ENCODE measurements at regions of chr2 and their contacts with region 1.

Region 1: DNA sequence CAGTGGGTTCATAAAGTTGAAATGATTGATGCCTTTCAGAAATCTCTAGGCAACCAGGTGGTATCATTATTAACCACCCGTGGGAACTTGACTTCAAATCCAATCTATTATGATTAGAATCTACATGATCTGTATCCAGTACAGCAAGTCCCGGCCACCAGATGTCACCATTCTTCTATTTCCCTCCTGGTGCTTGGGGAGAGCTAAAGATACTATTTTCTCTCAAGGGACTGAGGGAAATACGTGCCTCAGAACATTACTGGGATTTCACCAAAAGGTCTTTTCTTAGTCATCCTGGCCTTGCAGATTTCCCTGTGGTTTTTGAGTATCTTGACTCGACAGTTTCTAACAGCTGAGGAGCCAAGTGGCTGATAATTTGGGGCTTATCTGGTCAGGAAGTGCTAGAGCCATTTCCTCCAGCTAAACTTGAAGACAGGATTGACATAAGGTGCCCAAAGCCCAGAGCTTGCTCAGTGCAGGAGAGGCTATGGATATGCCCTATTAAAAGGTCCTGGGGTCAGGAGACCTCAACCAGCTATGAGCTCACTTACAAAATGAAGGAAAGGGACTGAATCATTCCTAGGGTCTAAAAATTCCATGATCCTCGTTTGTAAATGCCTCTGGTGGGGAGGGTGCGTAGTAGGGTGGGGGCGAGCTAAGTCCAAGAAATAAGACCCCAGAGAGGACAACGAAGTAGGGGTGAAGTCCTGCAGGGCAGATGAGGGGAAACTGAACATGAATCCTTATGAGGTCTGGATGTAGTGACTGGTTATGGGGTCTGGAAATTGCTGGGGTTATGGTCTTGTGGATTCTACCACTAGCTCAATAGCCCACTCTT is 135.4 kb upstream of the MGAT5 start:
- DNase-seq: peak; percentile 70 to 91
- ATAC-seq: peak; percentile 45 to 81 (median 61)
- H3K4me3 ChIP-seq: peak overlapping the region in 3 of 10 donors; percentile 1 to 8 (median 2)
- H3K27ac ChIP-seq: peak overlapping the region in 8 of 10 donors; percentile 92 to 98 (median 95)
- H3K4me1 ChIP-seq: peaks cover 4 to 45% (median 40%) of the 10 kb centered on the region in 9 donors
- H3K27me3 ChIP-seq: no peaks in the 10 kb centered on the region
- CTCF ChIP-seq: peak; percentile 48 to 93 (median 84)

Region 2: DNA sequence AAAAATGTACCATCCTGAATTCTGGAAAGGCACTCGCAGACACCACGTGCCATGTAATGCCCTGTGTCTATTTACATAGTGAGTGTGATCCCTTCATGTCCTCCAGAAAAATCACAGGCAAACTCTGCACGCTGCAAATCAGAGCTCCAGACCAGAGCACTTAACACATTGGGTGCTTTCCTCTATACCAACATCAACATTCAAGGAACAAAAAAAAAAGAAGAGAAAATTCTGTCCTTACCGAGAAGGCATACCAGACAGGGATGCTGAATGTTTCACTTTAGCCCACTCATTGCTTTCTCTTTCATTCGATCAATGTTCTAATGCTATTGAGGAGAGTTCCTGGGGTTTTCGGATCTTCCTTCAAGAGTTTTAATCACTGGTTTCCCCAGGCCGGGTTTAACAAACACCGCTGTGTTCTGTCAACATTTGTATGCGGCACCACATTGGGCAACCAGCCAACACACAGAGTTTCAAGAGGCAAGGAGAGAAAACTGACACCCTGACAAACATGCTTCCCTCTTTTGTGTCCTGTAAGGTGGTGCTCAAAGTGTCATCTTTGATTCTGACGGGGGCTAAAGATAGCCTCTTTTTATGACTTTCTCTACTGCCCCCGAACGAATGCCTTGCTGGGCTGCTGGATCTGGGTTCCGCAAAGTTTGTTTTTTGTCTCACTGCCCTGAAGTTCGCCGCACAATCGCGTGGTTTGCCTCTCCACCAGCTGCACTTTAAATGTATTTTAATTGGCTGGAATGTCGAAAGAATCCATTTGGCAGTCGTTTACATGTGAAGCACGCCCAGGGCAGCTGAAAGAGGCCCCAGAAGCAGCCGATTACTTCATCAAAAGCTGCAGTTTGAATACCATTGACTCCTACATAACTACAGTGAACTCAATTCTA is 443.8 kb before region 1 on chr2:
- intact Hi-C with region 1: no loop called
- DNase-seq: peak; percentile 25 to 43
- ATAC-seq: peak; percentile 42 to 76 (median 66)
- H3K4me3 ChIP-seq: peak overlapping the region in 9 of 10 donors; percentile 4 to 48 (median 31)
- H3K27ac ChIP-seq: peak overlapping the region; percentile 4 to 82 (median 75)
- H3K4me1 ChIP-seq: peaks cover 2 to 38% (median 20%) of the 10 kb centered on the region in 9 donors
- H3K27me3 ChIP-seq: no peaks in the 10 kb centered on the region
- CTCF ChIP-seq: no peak

Region 3: DNA sequence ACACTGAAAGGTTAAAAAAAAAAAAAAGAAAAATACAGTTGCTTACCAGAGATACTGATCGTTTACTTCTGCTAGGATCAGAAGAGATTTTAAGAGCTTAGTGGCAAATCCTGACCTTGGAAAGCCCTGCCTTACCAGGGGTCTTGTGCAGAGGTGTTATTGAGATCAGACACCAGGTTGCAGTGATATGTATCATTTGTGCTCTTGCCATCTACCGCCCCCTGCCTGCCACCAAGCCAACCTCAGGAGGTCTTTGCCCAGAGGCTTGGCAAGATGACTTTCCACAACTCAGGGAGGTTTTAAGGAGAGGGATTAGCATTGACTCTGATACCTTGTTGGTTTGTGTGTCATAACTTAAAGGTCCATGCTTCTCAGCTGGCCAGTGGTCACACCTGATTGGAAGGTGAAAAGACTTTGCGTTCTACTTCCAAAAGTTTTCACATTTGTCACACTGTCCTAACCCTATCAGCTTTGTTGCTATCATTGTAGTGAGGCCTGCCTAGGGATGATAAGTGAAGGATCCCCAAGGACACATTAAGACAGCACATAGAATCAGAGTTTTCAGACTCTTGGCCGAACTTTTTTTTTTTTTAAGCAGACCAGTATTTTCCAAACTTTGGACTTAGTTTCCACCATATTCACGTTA is 89.2 kb after region 1 on chr2:
- intact Hi-C with region 1: loop called (anchors 5 to 10 kb)
- DNase-seq: peak; percentile 52 to 60
- ATAC-seq: peak; percentile 63 to 86 (median 80)
- H3K4me3 ChIP-seq: no peak overlapping the region
- H3K27ac ChIP-seq: peak overlapping the region in 5 of 10 donors; percentile 3 to 63 (median 36)
- H3K4me1 ChIP-seq: peaks cover 14 to 58% (median 47%) of the 10 kb centered on the region in 9 donors
- H3K27me3 ChIP-seq: no peaks in the 10 kb centered on the region
- CTCF ChIP-seq: peak; percentile 38 to 76 (median 66)

Region 4: DNA sequence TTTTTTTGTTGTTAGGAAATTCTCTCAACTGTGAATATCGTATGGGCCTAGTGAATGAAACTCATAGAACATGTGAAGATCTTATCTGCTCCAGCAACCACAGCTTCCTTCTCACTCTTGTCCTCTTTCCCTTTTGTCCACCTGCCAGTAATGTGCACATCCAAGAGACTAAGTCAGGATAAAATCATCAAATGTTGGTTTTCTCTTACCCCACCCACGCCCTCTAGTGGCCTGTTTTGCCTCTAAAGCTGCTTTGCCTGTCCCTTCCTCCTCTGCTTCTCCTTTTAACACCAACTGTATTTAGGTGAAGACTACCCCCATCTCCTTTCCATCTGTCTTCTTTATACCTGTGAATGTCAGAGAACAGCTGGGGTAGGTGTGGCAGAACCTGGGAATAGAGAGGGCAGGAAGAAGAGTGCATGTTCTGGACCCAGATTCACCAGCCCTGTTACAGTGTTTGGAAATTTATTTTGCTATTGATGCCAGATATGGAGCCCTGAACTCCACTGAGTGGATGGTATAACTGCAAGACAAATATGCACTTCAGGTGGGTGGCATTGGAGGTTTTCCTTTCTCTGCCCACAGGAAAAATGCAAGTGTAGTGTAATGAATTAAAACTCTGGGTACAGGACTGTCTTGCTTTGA is 127.0 kb after region 1 on chr2:
- intact Hi-C with region 1: loop called (anchors 1 to 10 kb)
- DNase-seq: peak; percentile 55 to 84
- ATAC-seq: peak in 7 of 8 donors; percentile 53 to 79 (median 68)
- H3K4me3 ChIP-seq: no peak overlapping the region
- H3K27ac ChIP-seq: peak overlapping the region in 2 of 10 donors; percentile 24 to 56
- H3K4me1 ChIP-seq: peaks cover 6 to 91% (median 70%) of the 10 kb centered on the region in 9 donors
- H3K27me3 ChIP-seq: no peaks in the 10 kb centered on the region
- CTCF ChIP-seq: peak; percentile 52 to 83 (median 78)

Region 5: GRCh38 chr2:134402410-134402809 is 283.9 kb after region 1 on chr2:
- intact Hi-C with region 1: loop called in 1 of 10 experiments (anchors 2 kb)
- DNase-seq: peak in 1 of 2 donors; percentile 57
- ATAC-seq: peak; percentile 62 to 86 (median 76)
- H3K4me3 ChIP-seq: no peak overlapping the region
- H3K27ac ChIP-seq: peak overlapping the region in 9 of 10 donors; percentile 39 to 88 (median 71)
- H3K4me1 ChIP-seq: peaks cover 16 to 64% (median 47%) of the 10 kb centered on the region in 9 donors
- H3K27me3 ChIP-seq: no peaks in the 10 kb centered on the region
- CTCF ChIP-seq: no peak

Region 6: DNA sequence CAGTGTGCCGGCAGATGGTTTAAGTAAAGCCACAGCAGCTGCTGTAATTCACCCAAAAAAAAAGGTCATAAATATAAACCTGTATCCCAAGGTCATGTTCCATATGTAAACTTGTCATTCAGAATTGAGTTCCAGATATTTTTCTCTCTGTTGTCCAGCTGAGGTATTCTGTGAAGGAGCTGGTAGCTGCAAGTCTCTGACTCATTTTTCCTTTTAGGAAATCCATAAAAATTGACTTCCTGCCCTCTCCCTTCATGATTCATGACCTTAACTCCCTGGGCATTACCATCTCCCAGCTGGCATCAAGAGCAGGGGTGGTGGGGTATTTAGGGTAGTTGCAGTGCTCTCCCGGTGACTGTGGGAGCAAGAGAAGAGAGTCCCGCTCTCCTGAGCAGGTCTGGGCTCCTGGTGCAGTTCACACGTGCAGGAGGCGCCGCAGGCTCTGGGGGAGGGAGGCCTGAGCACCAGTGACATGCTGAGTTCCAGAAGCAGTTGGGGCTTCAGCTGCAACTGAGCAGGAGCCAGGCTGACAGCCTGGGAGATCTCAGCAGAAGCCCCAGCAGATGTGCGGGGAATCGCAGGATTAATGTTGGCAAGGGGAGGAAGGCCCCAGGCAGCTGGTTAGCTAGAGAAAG is 328.0 kb after region 1 on chr2:
- intact Hi-C with region 1: loop called in 3 of 10 experiments (anchors 1 to 5 kb)
- DNase-seq: no peak
- ATAC-seq: no peak
- H3K4me3 ChIP-seq: no peak overlapping the region
- H3K27ac ChIP-seq: no peak overlapping the region
- H3K4me1 ChIP-seq: peaks cover 0 to 42% (median 16%) of the 10 kb centered on the region in 9 donors
- H3K27me3 ChIP-seq: no peaks in the 10 kb centered on the region
- CTCF ChIP-seq: no peak

Region 7: DNA sequence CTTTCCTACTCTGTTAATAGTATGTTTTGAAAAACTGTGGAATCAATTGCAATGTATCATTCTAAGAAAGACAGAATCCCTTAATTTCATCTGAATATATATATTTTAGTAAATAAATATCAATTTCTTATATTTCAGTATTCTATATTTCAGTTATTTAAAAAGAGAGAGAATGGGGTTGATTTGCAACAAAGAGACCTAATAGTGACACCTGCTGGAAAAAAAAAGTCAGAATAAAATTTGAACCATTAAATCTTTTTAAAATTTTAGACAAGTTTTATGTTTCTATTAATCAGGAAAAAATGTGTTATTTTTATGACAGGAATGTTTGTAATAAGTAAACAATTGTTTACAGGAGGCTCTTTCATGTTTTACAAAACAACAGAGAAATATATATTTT is 779.4 kb after region 1 on chr2:
- intact Hi-C with region 1: loop called in 2 of 10 experiments (anchors 5 to 10 kb)
- DNase-seq: no peak
- ATAC-seq: no peak
- H3K4me3 ChIP-seq: no peak overlapping the region
- H3K27ac ChIP-seq: no peak overlapping the region
- H3K4me1 ChIP-seq: no peaks in the 10 kb centered on the region
- H3K27me3 ChIP-seq: no peaks in the 10 kb centered on the region
- CTCF ChIP-seq: peak in 8 of 9 donors; percentile 14 to 71 (median 55)

Measured in heart right ventricle (tissue), 16 donors.